HepG2 (cell line): ENCODE measurements at regions of chr1 and their contacts with region 1.

Region 1: DNA sequence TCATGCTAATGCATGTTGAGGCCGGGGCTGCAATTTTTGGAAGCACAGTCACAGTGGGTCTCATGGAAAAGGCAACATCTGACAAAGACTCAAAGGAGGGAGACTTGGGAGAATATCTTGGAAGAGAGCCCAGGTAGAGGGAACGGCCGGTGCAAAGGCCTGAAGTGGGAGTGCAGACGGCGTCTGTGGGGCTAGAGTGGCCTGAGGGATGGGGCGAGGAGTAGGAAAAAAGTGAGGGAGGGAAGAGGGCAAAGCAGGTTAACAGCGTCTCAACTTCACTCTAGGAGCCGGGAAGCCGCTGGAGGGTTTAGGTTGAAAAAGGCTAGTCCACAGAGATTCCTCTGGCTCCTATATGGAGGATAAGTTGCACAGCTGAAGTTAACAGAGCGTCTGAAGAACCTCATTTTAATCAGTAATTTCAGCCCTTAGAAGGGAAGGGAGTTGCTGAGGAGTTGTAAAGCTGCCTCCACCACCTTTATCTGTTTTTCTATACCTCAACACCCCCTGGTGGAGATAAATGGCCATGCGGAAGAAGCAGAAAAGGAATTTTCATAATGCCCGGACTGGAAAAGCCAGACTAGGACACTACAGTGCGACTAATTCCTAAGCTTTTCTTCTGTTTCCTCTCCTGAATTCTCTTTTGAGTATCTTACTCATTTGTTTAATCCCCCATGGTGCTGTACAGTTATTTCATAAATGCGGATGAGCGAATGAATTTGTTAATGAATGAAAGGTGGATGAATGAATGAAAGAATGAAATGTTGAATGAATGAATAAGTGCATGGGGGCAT is 78.7 kb upstream of the ZNF281 start:
- DNase-seq: peak; percentile 68
- ATAC-seq: peak; percentile 84
- H3K4me3 ChIP-seq: no peak overlapping the region
- H3K27ac ChIP-seq: no peak overlapping the region
- H3K4me1 ChIP-seq: peaks cover 12% of the 10 kb centered on the region
- H3K27me3 ChIP-seq: no peaks in the 10 kb centered on the region
- CTCF ChIP-seq: peak; percentile 86
- EP300 ChIP-seq: no peak
- POLR2A ChIP-seq: no peak
- RAD21 ChIP-seq: peak; percentile 86

Region 2: DNA sequence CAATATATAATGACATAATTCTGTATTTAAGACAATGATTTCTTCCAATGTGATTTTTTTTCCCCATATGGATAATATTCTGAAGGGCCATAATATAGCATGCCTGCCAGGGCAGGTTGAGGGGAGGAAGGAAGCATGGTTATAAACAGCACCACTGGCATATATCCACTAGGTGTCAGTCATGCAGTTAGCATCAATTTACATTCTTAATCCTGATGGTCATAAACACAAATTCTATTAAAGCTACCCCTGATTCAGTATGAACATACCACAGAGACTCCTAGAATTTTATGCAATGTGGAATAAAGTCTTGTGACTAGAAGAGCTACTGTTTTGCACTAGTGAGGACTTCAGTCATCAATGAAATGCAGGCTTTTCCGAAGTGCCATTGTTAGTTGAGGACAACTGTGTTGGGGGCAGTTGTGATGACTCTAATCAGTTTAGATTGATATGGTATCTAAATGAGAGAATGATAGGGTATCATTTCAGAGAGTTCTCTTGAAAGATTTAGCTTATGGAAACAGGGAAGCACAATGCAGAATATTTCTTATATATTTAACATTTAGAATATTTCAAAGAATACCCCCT is 803.8 kb before region 1 on chr1:
- CTCF ChIA-PET with region 1: interaction called, 5 read pairs
- POLR2A ChIA-PET with region 1: no interaction called
- in situ Hi-C with region 1: no loop called
- intact Hi-C with region 1: loop called (anchors 5 kb)
- DNase-seq: peak; percentile 25
- ATAC-seq: peak; percentile 91
- H3K4me3 ChIP-seq: no peak overlapping the region
- H3K27ac ChIP-seq: no peak overlapping the region
- H3K4me1 ChIP-seq: no peaks in the 10 kb centered on the region
- H3K27me3 ChIP-seq: no peaks in the 10 kb centered on the region; a peak in 1 of 5 replicates
- CTCF ChIP-seq: peak; percentile 77
- EP300 ChIP-seq: no peak
- POLR2A ChIP-seq: no peak
- RAD21 ChIP-seq: peak; percentile 40

Region 3: DNA sequence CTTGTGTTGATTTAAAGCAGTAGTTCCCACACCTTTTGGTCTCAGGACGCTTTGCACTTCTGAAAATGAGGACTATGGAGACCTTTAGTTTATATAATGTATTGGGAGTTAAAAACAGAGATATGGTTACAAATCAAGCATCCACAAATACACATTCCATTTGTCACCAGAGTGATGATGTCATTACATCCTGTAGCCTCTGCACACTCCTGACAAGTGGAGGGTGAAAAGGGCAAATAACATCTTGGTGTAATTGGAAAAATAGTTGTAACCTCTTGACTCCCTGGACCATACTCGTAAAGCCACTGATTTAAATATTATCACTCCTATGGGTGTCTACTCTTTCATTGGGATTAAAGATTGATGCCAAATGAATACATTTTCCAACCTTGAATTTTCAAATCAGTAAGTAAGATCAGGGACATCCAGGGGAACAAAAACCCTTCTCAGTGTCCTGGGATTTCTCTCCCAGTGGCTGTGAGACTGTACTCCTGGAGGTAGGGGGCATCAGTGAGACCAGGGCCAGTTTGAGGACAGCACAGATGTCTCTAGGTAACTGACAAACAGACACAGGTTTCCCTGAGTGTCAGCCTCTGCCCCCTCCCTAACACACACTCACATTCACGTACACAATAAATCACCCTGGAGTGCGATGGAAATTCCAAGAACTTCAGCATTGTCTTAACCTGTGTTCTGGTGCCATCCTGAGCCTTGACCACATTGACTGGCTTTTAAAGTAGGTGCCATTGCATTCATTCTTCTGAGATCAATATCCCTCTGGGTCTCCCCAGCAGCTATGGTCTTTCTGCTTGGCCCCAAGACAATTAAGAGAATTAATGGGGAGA is 398.1 kb before region 1 on chr1:
- CTCF ChIA-PET with region 1: no interaction called
- POLR2A ChIA-PET with region 1: no interaction called
- in situ Hi-C with region 1: no loop called
- intact Hi-C with region 1: loop called (anchors 1 kb)
- DNase-seq: peak; percentile 15
- ATAC-seq: peak; percentile 80
- H3K4me3 ChIP-seq: no peak overlapping the region
- H3K27ac ChIP-seq: no peak overlapping the region
- H3K4me1 ChIP-seq: no peaks in the 10 kb centered on the region
- H3K27me3 ChIP-seq: no peaks in the 10 kb centered on the region
- CTCF ChIP-seq: peak; percentile 43
- EP300 ChIP-seq: no peak
- POLR2A ChIP-seq: no peak
- RAD21 ChIP-seq: no peak

Region 4: GRCh38 chr1:200279810-200280411 is 208.7 kb before region 1 on chr1:
- CTCF ChIA-PET with region 1: interaction called, 21 read pairs
- POLR2A ChIA-PET with region 1: no interaction called
- in situ Hi-C with region 1: loop called (anchors 5 kb)
- intact Hi-C with region 1: loop called (anchors 1 kb)
- DNase-seq: peak; percentile 64
- ATAC-seq: peak; percentile 74
- H3K4me3 ChIP-seq: no peak overlapping the region
- H3K27ac ChIP-seq: no peak overlapping the region
- H3K4me1 ChIP-seq: peaks cover 20% of the 10 kb centered on the region
- H3K27me3 ChIP-seq: no peaks in the 10 kb centered on the region
- CTCF ChIP-seq: peak; percentile 85
- EP300 ChIP-seq: no peak
- POLR2A ChIP-seq: no peak
- RAD21 ChIP-seq: peak; percentile 69

Region 5: GRCh38 chr1:200409761-200410565 is 78.6 kb before region 1 on chr1 and contains the start of gene ZNF281:
- CTCF ChIA-PET with region 1: no interaction called
- POLR2A ChIA-PET with region 1: no interaction called
- in situ Hi-C with region 1: loop called (anchors 10 kb)
- intact Hi-C with region 1: loop called (anchors 5 kb)
- DNase-seq: peak; percentile 85
- ATAC-seq: peak; percentile 96
- H3K4me3 ChIP-seq: peak within 1 kb of the TSS; percentile 93 to 97 (median 93)
- H3K27ac ChIP-seq: peak within 1 kb of the TSS; percentile 77
- H3K4me1 ChIP-seq: peaks cover 81% of the 10 kb centered on the region
- H3K27me3 ChIP-seq: no peaks in the 10 kb centered on the region
- CTCF ChIP-seq: no peak
- EP300 ChIP-seq: no peak
- POLR2A ChIP-seq: peak; percentile 36 to 56
- RAD21 ChIP-seq: 0 out of 2 replicates have a peak, but pooled peaks have one; percentile 12
- total RNA-seq, gene ZNF281: 20.6 and 33.1 TPM in 2 replicates

Region 6: DNA sequence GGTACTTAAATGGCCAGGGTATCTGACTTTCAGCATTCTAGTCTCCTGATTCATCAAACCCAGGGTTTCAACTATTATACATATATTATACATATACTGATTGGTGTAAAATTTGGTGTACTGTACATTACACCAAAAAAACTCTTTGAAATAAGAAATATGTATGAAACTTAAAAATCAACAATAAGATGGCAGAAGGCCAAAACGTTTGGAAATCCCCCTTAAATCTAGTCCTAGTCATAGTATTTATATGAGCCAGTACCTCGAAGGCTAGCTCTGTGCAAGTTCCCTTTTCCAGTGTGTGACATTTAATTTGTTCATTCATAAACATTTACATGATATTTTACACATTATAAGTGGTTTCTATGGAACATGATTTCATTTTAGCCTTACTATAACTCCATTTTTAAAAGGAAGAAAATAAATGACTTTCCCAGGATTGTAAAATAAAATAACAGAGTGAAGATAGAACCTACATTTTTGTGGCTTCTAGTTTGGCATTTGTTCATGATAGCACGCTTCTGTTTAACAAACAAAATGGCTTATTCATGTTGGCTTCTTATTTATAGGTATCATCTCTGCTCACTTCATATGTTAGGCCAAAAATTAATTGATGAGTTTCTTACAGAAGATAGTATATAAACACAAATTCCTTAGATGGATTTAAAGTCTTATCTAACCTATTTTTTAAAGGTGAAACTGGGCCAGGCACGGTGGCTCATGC is 59.9 kb before region 1 on chr1:
- CTCF ChIA-PET with region 1: no interaction called
- POLR2A ChIA-PET with region 1: no interaction called
- in situ Hi-C with region 1: no loop called
- intact Hi-C with region 1: no loop called
- DNase-seq: no peak
- ATAC-seq: no peak
- H3K4me3 ChIP-seq: no peak overlapping the region
- H3K27ac ChIP-seq: no peak overlapping the region
- H3K4me1 ChIP-seq: peaks cover 40% of the 10 kb centered on the region
- H3K27me3 ChIP-seq: no peaks in the 10 kb centered on the region
- CTCF ChIP-seq: no peak
- EP300 ChIP-seq: no peak
- POLR2A ChIP-seq: no peak
- RAD21 ChIP-seq: no peak

Region 7: DNA sequence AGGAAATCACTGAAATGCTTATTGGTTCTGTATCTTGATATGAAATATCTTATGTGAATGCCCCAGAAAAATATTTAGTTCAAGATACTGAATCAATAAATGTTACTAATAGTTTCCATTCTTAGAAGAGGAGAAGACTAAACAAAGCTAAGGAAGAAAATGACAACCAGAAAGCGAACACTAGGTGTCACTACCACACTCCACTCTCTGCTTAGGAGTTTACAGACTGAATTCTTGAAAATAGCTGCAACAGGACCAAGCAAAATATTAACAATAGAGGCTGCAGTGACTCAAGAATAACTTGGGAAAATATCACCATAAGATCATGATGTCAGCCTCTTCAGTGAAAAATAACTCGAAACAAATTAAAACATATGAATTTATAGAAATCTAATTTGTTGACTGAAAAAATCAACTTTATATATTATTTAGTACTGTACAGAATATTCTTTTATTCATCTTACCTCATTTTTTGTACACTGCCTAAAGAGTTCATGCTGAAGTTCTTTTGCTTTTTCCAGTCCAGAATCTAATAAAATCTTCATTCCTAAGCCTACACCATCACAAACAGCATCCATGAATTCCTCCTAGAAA is 70.4 kb after region 1 on chr1:
- CTCF ChIA-PET with region 1: no interaction called
- POLR2A ChIA-PET with region 1: no interaction called
- in situ Hi-C with region 1: no loop called
- intact Hi-C with region 1: no loop called
- DNase-seq: peak; percentile 29
- ATAC-seq: peak; percentile 67
- H3K4me3 ChIP-seq: no peak overlapping the region
- H3K27ac ChIP-seq: no peak overlapping the region
- H3K4me1 ChIP-seq: no peaks in the 10 kb centered on the region
- H3K27me3 ChIP-seq: no peaks in the 10 kb centered on the region
- CTCF ChIP-seq: peak; percentile 66
- EP300 ChIP-seq: no peak
- POLR2A ChIP-seq: no peak
- RAD21 ChIP-seq: peak; percentile 41